HCT116 (cell line): ENCODE measurements at regions of chr2 and their contacts with region 1.

Region 1: GRCh38 chr2:178112202-178113152 is at the start of gene RBM45:
- DNase-seq: peak; percentile 87
- ATAC-seq: peak; percentile 97
- H3K4me3 ChIP-seq: peak within 1 kb of the TSS; percentile 77 to 97
- H3K27ac ChIP-seq: peak within 1 kb of the TSS; percentile 58
- H3K4me1 ChIP-seq: peaks cover 2 to 11% of the 10 kb centered on the region in 2 experiments; a peak in 1 of 4 replicates
- H3K27me3 ChIP-seq: no peaks in the 10 kb centered on the region
- CTCF ChIP-seq: peak; percentile 83 to 97 (median 93)
- POLR2A ChIP-seq: peak; percentile 79
- RAD21 ChIP-seq: peak; percentile 58
- total RNA-seq, gene RBM45: 7.4 TPM

Region 2: GRCh38 chr2:177983183-177983788 is 129.2 kb before region 1 on chr2:
- CTCF ChIA-PET with region 1: no interaction called
- POLR2A ChIA-PET with region 1: no interaction called
- RAD21 ChIA-PET with region 1: interaction called in 1 of 2 experiments, 3 read pairs
- intact Hi-C with region 1: loop called (anchors 5 kb)
- DNase-seq: peak; percentile 34
- ATAC-seq: peak; percentile 90
- H3K4me3 ChIP-seq: no peak overlapping the region
- H3K27ac ChIP-seq: no peak overlapping the region
- H3K4me1 ChIP-seq: no peaks in the 10 kb centered on the region
- H3K27me3 ChIP-seq: no peaks in the 10 kb centered on the region
- CTCF ChIP-seq: peak; percentile 58 to 94 (median 93); a peak in 5 of 6 replicates
- POLR2A ChIP-seq: no peak
- RAD21 ChIP-seq: peak; percentile 80

Region 3: DNA sequence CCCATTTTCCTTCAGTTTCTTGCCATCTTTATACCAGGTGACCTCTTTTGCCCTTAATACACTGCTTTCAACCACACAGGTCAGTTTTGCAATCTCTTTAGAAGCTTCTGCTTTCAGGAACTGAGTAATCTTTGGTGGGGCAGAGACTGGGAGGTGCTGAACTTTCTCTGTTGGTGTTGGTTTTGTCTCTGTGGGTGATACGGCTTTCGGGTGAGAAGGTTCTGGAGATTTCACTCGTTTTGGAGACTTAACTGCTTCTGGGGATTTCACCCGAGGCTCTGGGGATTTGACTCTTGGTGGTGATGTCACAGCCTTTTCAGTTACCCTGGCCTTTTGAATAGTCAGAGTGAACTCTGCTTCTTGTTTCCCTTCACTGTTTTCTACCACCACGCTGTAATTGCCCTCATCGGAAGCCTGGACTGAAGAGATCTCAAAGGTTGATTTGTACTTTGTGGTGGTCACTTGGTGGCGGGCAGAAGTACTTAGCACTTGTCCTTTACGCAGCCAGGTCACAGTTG is 418.2 kb after region 1 on chr2:
- CTCF ChIA-PET with region 1: no interaction called
- POLR2A ChIA-PET with region 1: no interaction called
- RAD21 ChIA-PET with region 1: no interaction called
- intact Hi-C with region 1: no loop called
- DNase-seq: no peak
- ATAC-seq: no peak
- H3K4me3 ChIP-seq: no peak overlapping the region
- H3K27ac ChIP-seq: no peak overlapping the region
- H3K4me1 ChIP-seq: no peaks in the 10 kb centered on the region
- H3K27me3 ChIP-seq: no peaks in the 10 kb centered on the region
- CTCF ChIP-seq: no peak
- POLR2A ChIP-seq: no peak
- RAD21 ChIP-seq: no peak